Endothelial cell of umbilical vein (primary cell): ENCODE measurements at regions of chr7 and their contacts with region 1.

Region 1: GRCh38 chr7:105444342-105444987 is 55.7 kb upstream of the SRPK2 start:
- DNase-seq: no peak
- H3K4me3 ChIP-seq: no peak overlapping the region
- H3K27ac ChIP-seq: no peak overlapping the region
- H3K4me1 ChIP-seq: peaks cover 4% of the 10 kb centered on the region
- H3K27me3 ChIP-seq: no peaks in the 10 kb centered on the region
- CTCF ChIP-seq: no peak
- POLR2A ChIP-seq: no peak

Region 2: GRCh38 chr7:105278973-105279687 is 165.3 kb before region 1 on chr7:
- CTCF ChIA-PET with region 1: no interaction called
- POLR2A ChIA-PET with region 1: no interaction called
- dilution Hi-C with region 1: no loop called
- intact Hi-C with region 1: no loop called
- DNase-seq: no peak
- H3K4me3 ChIP-seq: no peak overlapping the region
- H3K27ac ChIP-seq: no peak overlapping the region
- H3K4me1 ChIP-seq: no peaks in the 10 kb centered on the region
- H3K27me3 ChIP-seq: no peaks in the 10 kb centered on the region
- CTCF ChIP-seq: no peak
- POLR2A ChIP-seq: no peak

Region 3: DNA sequence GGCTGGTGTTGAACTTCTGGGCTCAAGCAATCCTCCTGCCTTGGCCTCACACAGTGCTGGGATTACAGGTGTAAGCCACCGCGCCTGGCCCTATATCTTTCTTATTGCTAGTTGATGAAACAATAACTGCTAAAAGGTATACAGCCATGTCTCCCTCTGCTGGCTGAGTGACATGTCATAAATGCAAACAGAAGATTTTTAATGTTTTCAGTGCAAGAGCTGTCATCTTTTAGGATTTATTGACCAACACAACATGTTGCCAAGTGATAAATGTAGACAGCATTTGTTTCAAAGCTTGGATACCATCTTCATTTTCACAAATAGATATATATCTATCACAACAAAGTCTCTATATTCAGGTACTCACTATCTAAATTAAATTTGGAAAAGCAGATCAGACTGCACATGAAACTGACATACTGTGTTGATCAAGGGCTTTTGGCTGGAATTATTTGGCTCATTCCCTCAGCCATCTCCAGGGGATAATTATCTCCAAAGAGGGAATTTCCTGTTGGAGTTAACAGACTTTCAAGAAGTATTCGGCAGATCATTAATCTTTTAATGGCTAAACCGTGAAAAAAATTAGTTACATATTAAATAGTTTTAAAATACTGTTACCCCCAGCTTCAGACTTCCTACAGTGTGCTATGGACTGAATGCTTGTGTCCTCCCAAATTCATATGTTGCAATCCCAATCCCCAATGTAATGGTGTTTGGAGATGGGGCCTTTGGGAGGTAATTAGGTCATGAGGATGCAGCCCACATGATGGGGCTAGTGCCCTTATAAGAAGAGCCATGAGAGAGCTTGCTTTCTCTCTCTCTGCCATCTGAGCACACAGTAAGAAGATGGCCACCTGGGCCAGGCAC is 14.5 kb before region 1 on chr7:
- CTCF ChIA-PET with region 1: interaction called, 15 read pairs
- POLR2A ChIA-PET with region 1: no interaction called
- dilution Hi-C with region 1: no loop called
- intact Hi-C with region 1: no loop called
- DNase-seq: peak; percentile 83
- H3K4me3 ChIP-seq: no peak overlapping the region
- H3K27ac ChIP-seq: no peak overlapping the region
- H3K4me1 ChIP-seq: no peaks in the 10 kb centered on the region
- H3K27me3 ChIP-seq: no peaks in the 10 kb centered on the region
- CTCF ChIP-seq: peak; percentile 38 to 44
- POLR2A ChIP-seq: no peak

Region 4: DNA sequence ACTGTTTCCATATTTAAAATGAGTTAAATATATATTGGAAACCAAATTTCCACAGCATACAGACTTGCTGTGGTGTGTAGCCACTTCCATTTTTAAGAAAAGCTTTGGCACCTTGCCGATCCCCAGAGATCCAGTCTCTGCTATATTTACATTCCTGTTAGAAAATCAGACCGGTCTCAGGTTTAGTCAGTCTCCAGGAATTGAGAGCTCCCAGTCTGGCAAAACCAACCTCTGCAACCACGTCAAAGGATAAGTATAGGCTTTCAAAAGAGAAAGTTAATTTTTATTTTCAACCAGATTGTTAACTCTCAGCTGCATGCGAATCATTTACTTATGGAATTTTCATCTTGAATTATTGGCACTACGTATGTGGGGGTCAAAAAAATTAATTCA is 49.5 kb after region 1 on chr7:
- CTCF ChIA-PET with region 1: no interaction called
- POLR2A ChIA-PET with region 1: no interaction called
- dilution Hi-C with region 1: no loop called
- intact Hi-C with region 1: no loop called
- DNase-seq: peak; percentile 85
- H3K4me3 ChIP-seq: no peak overlapping the region
- H3K27ac ChIP-seq: peak overlapping the region; percentile 73
- H3K4me1 ChIP-seq: peaks cover 43% of the 10 kb centered on the region
- H3K27me3 ChIP-seq: no peaks in the 10 kb centered on the region
- CTCF ChIP-seq: no peak
- POLR2A ChIP-seq: peak; percentile 21